ENCODE measurements at regions of chr5 and their contacts with region 1.

Region 1: GRCh38 chr5:99032234-99033013 is 103.6 kb upstream of the CHD1 start:
- DNase-seq: peak; percentile 84
- H3K4me3 Mint-ChIP-seq: peak overlapping the region; percentile 72
- H3K27ac Mint-ChIP-seq: peak overlapping the region; percentile 24
- H3K4me1 Mint-ChIP-seq: peaks cover 14% of the 10 kb centered on the region
- H3K27me3 Mint-ChIP-seq: no peaks in the 10 kb centered on the region
- CTCF ChIP-seq: peak; percentile 78

Region 2: GRCh38 chr5:98414938-98415337 is 617.5 kb before region 1 on chr5:
- CTCF ChIA-PET with region 1: no interaction called
- POLR2A ChIA-PET with region 1: no interaction called
- intact Hi-C with region 1: no loop called
- DNase-seq: peak; percentile 16
- H3K4me3 Mint-ChIP-seq: no peak overlapping the region
- H3K27ac Mint-ChIP-seq: peak overlapping the region; percentile 3
- H3K4me1 Mint-ChIP-seq: peaks cover 14% of the 10 kb centered on the region
- H3K27me3 Mint-ChIP-seq: no peaks in the 10 kb centered on the region
- CTCF ChIP-seq: no peak

Region 3: DNA sequence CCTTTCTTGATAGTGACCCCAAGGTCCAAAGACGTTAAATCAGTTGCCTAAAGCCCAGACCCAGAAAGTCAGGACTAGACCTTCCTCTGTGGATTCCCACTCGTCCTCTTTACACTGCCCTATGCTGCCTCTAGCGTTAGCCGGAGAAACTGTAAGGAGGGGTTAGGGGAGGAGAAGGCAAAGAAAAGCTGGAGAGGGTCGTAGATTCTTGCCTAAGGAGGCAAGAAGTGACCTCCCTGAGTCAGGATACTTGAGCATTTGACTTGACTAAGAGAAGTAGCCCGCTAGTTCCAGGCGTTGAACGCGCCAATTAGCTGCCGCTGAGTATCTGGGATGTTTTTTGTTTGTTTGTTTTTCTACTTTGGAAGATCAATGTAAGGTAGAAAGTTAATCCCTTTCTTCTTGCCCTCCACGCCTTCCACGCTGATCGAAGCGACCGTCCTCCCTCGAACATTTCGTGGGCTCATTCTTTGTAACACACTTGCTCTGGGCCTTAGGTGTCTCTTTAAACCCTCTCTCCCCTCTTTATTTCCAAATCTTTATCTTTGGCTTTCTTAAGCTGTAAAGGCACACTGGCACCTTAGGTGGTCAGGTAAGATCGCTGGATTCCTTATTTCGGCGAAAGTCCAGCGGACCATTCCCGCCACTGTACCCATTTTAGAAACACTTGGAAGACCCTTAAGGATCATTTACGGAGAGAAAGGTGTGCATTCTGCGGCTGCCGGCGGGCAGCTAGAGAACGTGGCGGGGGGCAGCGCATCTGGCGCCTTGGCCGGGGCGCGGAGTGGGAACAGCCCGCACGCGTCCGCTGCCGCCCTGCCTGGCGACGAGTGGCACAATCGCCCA is 264.0 kb before region 1 on chr5:
- CTCF ChIA-PET with region 1: no interaction called
- POLR2A ChIA-PET with region 1: interaction called, 4 read pairs
- intact Hi-C with region 1: loop called (anchors 1 kb)
- DNase-seq: peak; percentile 67
- H3K4me3 Mint-ChIP-seq: peak overlapping the region; percentile 95
- H3K27ac Mint-ChIP-seq: no peak overlapping the region
- H3K4me1 Mint-ChIP-seq: peaks cover 20% of the 10 kb centered on the region
- H3K27me3 Mint-ChIP-seq: no peaks in the 10 kb centered on the region
- CTCF ChIP-seq: peak; percentile 92

Region 4: DNA sequence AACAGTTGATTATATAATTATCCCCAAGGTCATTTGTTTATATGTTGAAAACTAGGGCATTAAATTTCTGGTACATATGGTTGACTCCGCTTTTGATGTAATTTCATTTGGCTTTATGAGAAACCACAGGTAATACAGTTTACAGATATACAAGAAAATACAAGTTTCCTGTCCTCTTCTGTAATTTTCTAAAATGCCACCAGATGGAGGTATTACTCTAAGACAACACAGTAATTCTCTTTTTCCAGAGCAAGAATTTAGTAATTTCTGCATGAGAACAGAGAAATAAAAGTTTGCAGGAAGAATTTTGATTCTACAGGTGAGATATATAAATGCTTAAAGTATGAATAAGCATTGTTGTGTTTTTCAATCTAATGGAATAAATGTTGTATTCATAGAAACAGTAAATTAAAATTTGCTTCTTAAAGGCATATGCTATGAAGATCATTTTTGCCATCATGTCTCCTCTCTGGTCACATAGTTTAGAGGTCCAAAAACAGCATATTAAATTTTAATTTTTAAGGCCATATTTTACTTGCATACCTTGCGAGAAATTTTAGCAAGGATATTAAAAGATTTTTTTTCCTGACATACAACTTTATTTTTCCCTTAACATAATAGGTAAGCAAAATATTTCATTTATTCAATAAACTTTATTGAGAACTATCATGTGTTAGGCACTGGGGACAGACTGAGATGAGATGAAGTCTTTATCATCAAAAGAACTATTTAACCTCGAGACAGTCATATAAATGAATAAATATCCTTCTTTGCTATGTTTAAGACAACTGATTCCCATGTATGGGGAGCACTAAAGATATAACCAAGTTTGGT is 126.3 kb before region 1 on chr5:
- CTCF ChIA-PET with region 1: interaction called, 43 read pairs
- POLR2A ChIA-PET with region 1: interaction called, 24 read pairs
- intact Hi-C with region 1: loop called (anchors 1 kb)
- DNase-seq: peak; percentile 60
- H3K4me3 Mint-ChIP-seq: no peak overlapping the region
- H3K27ac Mint-ChIP-seq: peak overlapping the region; percentile 31
- H3K4me1 Mint-ChIP-seq: peaks cover 22% of the 10 kb centered on the region
- H3K27me3 Mint-ChIP-seq: no peaks in the 10 kb centered on the region
- CTCF ChIP-seq: peak; percentile 78

Region 5: DNA sequence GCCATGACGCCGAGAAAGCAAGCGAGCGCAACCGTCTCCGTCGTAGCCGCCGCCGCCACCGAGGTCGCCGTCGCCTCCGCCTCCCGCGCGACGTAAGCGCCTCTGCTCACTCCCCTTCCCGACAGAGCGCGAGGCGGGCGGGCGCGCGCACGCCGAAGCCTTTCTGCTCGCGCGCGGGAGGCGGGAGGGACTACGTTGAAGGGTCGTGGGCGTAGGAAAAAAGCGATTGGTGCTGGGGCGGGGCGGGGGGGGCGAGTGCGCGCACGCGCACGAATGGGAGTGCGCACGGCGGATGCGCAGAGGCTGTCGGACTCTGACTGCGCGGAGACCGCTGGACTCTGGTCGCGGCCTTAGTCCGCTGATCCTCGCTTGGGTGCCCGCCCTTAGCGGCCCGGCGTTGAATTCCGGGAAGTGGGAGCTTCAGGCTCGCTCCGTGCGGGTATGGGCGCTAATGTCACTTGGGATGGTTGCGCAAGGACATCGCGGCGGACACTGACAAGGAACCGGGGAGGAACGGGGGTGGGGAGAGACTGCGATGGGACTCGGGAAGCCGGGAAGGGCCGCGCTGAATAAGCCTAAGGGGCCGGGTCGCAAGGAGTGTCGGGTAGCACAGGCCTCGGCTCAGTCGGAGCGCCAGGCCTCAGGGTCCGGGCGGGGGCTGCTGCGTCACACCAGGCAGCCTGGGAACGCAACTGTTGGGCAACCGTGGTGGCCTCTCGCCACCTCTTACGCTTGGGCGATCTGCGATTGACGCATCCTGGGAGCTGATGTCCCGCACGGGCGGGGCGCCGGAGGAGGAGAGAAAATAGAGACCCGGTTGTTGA is 103.3 kb before region 1 on chr5 and contains the start of gene CHD1:
- CTCF ChIA-PET with region 1: interaction called, 6 read pairs
- POLR2A ChIA-PET with region 1: interaction called, 22 read pairs
- intact Hi-C with region 1: loop called (anchors 1 kb)
- DNase-seq: peak; percentile 98
- H3K4me3 Mint-ChIP-seq: peak within 1 kb of the TSS; percentile 78
- H3K27ac Mint-ChIP-seq: peak within 1 kb of the TSS; percentile 100
- H3K4me1 Mint-ChIP-seq: peaks cover 16% of the 10 kb centered on the region
- H3K27me3 Mint-ChIP-seq: no peaks in the 10 kb centered on the region
- CTCF ChIP-seq: no peak
- total RNA-seq, gene CHD1: 50.8 and 54.7 TPM in 2 replicates

Region 6: DNA sequence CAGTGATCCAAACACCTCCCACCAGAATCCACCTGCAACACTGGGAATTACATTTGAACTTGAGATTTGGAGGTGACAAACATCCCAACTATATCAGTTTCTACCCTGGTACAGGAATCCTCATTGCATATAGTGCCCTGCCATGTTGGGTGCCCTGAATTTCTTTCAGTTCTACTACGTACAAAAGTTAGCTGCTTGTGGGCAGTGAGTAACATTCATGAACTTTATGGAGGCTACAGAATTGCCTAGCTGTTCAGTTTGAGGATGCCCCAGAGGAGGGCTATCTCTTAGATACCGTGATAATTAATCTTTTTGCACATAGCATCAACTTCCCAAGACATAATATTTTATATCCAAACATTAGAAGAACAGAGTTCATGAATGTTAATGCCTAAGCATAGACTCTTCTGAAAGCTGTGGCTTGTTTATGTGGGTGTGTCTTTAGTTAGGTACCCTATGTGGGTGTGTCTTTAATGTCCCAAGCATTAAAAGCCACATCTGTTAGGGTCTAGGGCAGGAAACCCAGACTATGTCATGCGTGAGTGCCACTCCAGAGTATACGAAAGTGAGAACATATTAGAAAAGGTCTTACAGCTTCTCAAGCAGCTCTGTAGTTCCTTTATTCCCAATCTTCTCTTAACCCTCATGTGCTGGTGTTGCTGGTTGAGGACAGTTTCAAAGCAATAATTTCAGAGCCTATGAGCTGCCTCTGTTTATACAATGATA is 56.6 kb before region 1 on chr5:
- CTCF ChIA-PET with region 1: interaction called, 3 read pairs
- POLR2A ChIA-PET with region 1: no interaction called
- intact Hi-C with region 1: loop called (anchors 2 kb)
- DNase-seq: no peak
- H3K4me3 Mint-ChIP-seq: no peak overlapping the region
- H3K27ac Mint-ChIP-seq: peak overlapping the region; percentile 35
- H3K4me1 Mint-ChIP-seq: peaks cover 22% of the 10 kb centered on the region
- H3K27me3 Mint-ChIP-seq: no peaks in the 10 kb centered on the region
- CTCF ChIP-seq: no peak

Region 7: DNA sequence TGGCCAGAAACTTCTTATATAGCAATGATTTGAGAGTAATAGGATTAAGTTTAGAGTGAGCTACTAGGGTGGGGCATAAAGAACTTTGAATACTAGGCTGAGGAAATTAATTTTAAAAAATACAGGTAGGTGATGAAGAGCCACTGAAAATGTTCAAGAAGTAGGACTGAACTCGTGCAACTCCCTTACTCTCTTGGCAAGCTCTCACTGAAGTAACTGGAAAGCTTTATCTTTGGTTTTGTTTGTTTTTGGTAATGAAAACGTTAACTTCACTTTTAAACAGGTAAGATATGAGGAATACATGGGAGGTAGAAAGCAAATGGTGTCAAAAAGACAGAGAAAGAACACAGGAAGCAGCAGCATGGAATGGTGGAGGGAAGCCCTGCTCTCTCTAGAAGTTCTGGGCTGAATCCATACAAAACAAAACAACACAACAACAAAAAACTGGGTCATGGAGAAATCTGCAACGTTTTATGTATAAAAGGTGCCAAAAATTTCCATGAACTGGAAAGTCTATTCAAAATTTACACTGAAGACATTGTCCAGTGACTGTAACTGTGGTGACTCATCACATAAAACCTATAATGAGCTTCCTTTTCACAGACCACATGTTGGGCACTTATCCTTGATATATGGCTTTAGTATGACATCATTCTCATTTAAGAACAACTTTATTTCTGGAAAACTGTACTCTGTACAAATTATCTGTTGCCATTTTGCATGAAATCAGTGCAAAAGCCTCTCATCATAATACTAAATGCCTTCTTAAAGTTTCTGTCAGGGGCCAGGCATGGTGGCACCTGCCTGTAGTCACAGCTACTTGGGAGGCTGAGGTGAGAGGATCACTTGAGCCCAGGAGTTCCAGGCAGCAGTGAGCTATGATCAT is 12.4 kb before region 1 on chr5:
- CTCF ChIA-PET with region 1: interaction called, 10 read pairs
- POLR2A ChIA-PET with region 1: interaction called, 6 read pairs
- intact Hi-C with region 1: no loop called
- DNase-seq: peak; percentile 81
- H3K4me3 Mint-ChIP-seq: peak overlapping the region; percentile 5
- H3K27ac Mint-ChIP-seq: peak overlapping the region; percentile 29
- H3K4me1 Mint-ChIP-seq: peaks cover 12% of the 10 kb centered on the region
- H3K27me3 Mint-ChIP-seq: no peaks in the 10 kb centered on the region
- CTCF ChIP-seq: no peak

Region 8: DNA sequence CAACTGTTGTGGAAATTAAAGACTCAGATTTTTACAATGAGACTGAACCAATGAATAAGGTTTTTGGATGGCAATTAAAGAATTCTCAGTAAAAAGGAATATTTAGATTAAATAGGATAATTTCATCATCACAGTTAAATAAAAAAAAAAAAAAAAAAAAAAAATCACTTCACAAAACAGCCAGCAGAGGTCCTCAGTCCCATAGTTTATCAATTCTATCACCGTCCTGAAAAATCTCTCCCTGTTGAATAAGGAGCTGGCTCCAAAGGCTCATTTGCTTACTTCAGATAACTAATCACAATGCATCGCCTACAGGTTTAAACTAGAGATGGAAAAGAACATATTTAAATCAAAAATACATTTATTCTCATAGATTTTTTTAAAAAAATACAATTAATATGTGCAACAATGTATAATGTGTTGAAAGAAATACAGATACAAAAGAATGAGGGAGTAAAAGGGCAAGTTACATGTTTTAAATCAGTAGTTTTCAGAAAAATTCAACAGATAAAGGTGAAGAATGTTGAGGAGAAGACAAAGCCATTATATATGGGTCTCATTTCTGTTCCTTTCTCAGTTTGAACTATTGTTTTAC is 72.2 kb after region 1 on chr5:
- CTCF ChIA-PET with region 1: no interaction called
- POLR2A ChIA-PET with region 1: no interaction called
- intact Hi-C with region 1: no loop called
- DNase-seq: peak; percentile 45
- H3K4me3 Mint-ChIP-seq: no peak overlapping the region
- H3K27ac Mint-ChIP-seq: no peak overlapping the region
- H3K4me1 Mint-ChIP-seq: no peaks in the 10 kb centered on the region
- H3K27me3 Mint-ChIP-seq: peaks cover 72% of the 10 kb centered on the region
- CTCF ChIP-seq: peak; percentile 47